IMR-90 (cell line): ENCODE measurements at regions of chr14 and their contacts with region 1.

Region 1: DNA sequence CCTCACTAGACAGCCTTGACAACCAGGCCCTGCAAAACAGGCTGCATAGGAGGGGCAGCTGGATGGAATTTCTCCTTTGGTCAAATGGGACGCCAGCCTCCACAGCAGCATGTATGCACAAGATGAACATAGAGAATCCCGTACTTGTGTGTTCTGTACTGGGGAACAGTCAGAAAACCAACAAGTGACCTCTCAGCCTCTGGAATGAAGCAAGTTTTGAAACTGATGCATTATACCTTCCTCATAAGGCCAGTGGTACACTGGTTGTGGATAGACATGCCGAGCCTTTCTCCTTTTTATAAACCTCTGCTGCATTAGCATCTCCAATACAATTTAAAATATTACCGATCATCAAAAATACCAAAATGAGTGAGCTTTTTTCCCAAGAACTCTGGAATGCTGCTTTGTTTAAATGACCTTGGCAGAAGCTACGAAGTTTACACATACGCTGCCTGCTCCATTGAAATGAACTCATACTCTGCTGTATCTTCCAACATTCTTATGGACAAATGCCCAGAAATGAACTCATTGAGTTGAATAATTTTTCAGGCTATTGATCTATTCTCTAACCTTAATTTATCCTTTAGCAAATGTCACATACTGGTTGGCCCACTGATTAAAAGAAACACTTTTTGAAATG is 47.6 kb upstream of the FERMT2 start:
- DNase-seq: peak; percentile 97
- ATAC-seq: peak; percentile 87
- H3K4me3 ChIP-seq: no peak overlapping the region
- H3K27ac ChIP-seq: peak overlapping the region; percentile 84
- H3K4me1 ChIP-seq: peaks cover 12% of the 10 kb centered on the region
- H3K27me3 ChIP-seq: no peaks in the 10 kb centered on the region
- CTCF ChIP-seq: no peak
- POLR2A ChIP-seq: no peak
- RAD21 ChIP-seq: no peak

Region 2: DNA sequence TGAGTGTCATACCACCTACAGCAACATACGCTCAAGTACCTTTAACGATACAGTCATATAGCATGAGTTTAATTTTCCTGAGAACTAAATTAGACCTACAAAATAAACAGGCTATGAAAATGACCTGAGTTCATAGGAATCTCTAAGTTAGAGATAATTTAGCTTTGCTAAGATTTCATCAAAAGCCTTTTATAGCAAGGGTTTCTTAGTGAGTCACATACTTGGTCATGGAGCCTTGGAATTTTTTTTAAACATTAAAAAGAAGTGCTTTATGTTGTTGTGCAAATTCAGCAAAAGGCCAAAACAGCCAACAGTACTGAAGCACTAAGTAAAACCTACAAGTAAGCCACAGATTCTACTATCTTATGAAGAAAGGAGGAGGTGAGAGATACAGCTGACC is 46.0 kb after region 1 on chr14:
- CTCF ChIA-PET with region 1: no interaction called
- POLR2A ChIA-PET with region 1: no interaction called
- dilution Hi-C with region 1: no loop called
- in situ Hi-C with region 1: no loop called
- intact Hi-C with region 1: loop called (anchors 5 kb)
- DNase-seq: peak; percentile 91
- ATAC-seq: peak; percentile 70
- H3K4me3 ChIP-seq: no peak overlapping the region
- H3K27ac ChIP-seq: peak overlapping the region; percentile 82
- H3K4me1 ChIP-seq: peaks cover 19% of the 10 kb centered on the region
- H3K27me3 ChIP-seq: no peaks in the 10 kb centered on the region
- CTCF ChIP-seq: no peak
- POLR2A ChIP-seq: no peak
- RAD21 ChIP-seq: no peak

Region 3: DNA sequence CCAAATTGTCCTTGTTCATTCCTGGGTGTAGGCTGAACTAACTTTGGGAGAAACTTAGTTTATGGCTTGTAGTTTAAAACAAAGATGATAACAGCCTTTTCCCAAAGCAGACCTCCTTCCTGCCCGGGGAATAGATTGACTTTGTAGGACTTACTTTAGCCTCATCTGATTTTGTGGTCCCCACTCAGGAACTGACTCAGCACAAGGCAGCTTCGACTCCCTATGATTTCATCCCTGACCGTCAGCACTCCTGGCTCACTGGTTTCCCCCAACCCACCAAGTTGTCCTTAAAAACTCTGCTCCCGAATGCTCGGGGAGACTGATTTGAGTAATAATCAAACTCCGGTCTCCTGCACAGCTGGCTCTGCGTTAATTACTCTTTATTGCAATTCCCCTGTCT is 194.7 kb after region 1 on chr14:
- CTCF ChIA-PET with region 1: no interaction called
- POLR2A ChIA-PET with region 1: no interaction called
- dilution Hi-C with region 1: no loop called
- in situ Hi-C with region 1: no loop called
- intact Hi-C with region 1: no loop called
- DNase-seq: peak; percentile 57
- ATAC-seq: no peak; the same call in 1 of the 2 replicates
- H3K4me3 ChIP-seq: no peak overlapping the region
- H3K27ac ChIP-seq: no peak overlapping the region
- H3K4me1 ChIP-seq: no peaks in the 10 kb centered on the region
- H3K27me3 ChIP-seq: peaks cover 4% of the 10 kb centered on the region
- CTCF ChIP-seq: no peak
- POLR2A ChIP-seq: no peak
- RAD21 ChIP-seq: no peak

Region 4: DNA sequence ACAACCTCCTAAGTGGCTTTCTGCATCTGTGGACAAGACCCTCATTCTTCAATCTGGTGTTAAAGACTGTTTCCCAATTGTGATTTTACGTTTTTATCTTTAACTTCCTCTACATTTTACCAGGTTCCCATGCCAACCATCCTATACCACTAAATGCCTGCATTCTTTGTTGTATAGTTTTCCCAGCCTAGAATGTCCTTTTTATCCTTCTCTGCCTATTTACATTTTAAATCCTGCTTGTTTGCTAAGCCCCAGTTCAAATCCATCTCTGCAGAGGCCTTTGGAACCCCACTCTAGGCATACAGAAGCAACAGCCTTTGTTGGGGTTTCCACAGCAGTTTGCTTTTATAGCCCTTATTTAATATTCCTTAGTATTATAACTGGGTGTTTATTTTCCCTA is 479.7 kb after region 1 on chr14:
- CTCF ChIA-PET with region 1: no interaction called
- POLR2A ChIA-PET with region 1: no interaction called
- dilution Hi-C with region 1: no loop called
- in situ Hi-C with region 1: no loop called
- intact Hi-C with region 1: no loop called
- DNase-seq: no peak
- ATAC-seq: no peak
- H3K4me3 ChIP-seq: no peak overlapping the region
- H3K27ac ChIP-seq: no peak overlapping the region
- H3K4me1 ChIP-seq: no peaks in the 10 kb centered on the region
- H3K27me3 ChIP-seq: no peaks in the 10 kb centered on the region
- CTCF ChIP-seq: no peak
- POLR2A ChIP-seq: no peak
- RAD21 ChIP-seq: no peak